ENCODE measurements at regions of chr13 and their contacts with region 1.

Region 1: GRCh38 chr13:37656247-37656940 is 57.8 kb upstream of the POSTN start:
- DNase-seq: peak; percentile 99
- ATAC-seq: peak; percentile 99
- H3K4me3 ChIP-seq: no peak overlapping the region
- H3K27ac ChIP-seq: peak overlapping the region; percentile 80
- H3K4me1 ChIP-seq: peaks cover 4% of the 10 kb centered on the region
- H3K27me3 ChIP-seq: no peaks in the 10 kb centered on the region
- CTCF ChIP-seq: no peak
- POLR2A ChIP-seq: no peak
- RAD21 ChIP-seq: no peak

Region 2: GRCh38 chr13:37701972-37702371 is 45.6 kb after region 1 on chr13:
- CTCF ChIA-PET with region 1: no interaction called
- POLR2A ChIA-PET with region 1: no interaction called
- dilution Hi-C with region 1: no loop called
- in situ Hi-C with region 1: no loop called
- intact Hi-C with region 1: loop called (anchors 2 kb)
- DNase-seq: peak; percentile 99
- ATAC-seq: peak; percentile 96
- H3K4me3 ChIP-seq: no peak overlapping the region
- H3K27ac ChIP-seq: peak overlapping the region; percentile 3; the same call in 1 of the 2 replicates
- H3K4me1 ChIP-seq: peaks cover 6% of the 10 kb centered on the region
- H3K27me3 ChIP-seq: no peaks in the 10 kb centered on the region
- CTCF ChIP-seq: no peak
- POLR2A ChIP-seq: no peak
- RAD21 ChIP-seq: no peak

Region 3: GRCh38 chr13:38763439-38764381 is 1107.3 kb after region 1 on chr13:
- CTCF ChIA-PET with region 1: no interaction called
- POLR2A ChIA-PET with region 1: no interaction called
- dilution Hi-C with region 1: no loop called
- in situ Hi-C with region 1: no loop called
- intact Hi-C with region 1: loop called (anchors 5 kb)
- DNase-seq: peak; percentile 33
- ATAC-seq: peak; percentile 84
- H3K4me3 ChIP-seq: no peak overlapping the region
- H3K27ac ChIP-seq: no peak overlapping the region
- H3K4me1 ChIP-seq: no peaks in the 10 kb centered on the region
- H3K27me3 ChIP-seq: no peaks in the 10 kb centered on the region
- CTCF ChIP-seq: peak; percentile 52
- POLR2A ChIP-seq: no peak
- RAD21 ChIP-seq: peak; percentile 47

Measured in IMR-90 (cell line).